Activated CD8-positive, alpha-beta T cell treated with anti-CD3 and anti-CD28 coated beads, Interleukin-2, amount 10 ng/mL, durations not matched to agents 7 days and 5 days (primary cell): ENCODE measurements at regions of chr12 and their contacts with region 1.

Region 1: GRCh38 chr12:1117970-1118563 is 127.0 kb downstream of the ERC1 start:
- DNase-seq: peak; percentile 81
- ATAC-seq: peak; percentile 43
- H3K4me3 Mint-ChIP-seq: no peak overlapping the region
- H3K27ac Mint-ChIP-seq: no peak overlapping the region
- H3K4me1 Mint-ChIP-seq: peaks cover 13% of the 10 kb centered on the region
- H3K27me3 Mint-ChIP-seq: no peaks in the 10 kb centered on the region

Region 2: GRCh38 chr12:1021886-1022619 is 96.0 kb before region 1 on chr12:
- CTCF ChIA-PET with region 1: no interaction called
- POLR2A ChIA-PET with region 1: no interaction called
- DNase-seq: no peak
- ATAC-seq: no peak
- H3K4me3 Mint-ChIP-seq: no peak overlapping the region
- H3K27ac Mint-ChIP-seq: no peak overlapping the region
- H3K4me1 Mint-ChIP-seq: no peaks in the 10 kb centered on the region
- H3K27me3 Mint-ChIP-seq: no peaks in the 10 kb centered on the region

Region 3: GRCh38 chr12:1047898-1048660 is 70.0 kb before region 1 on chr12:
- CTCF ChIA-PET with region 1: no interaction called
- POLR2A ChIA-PET with region 1: no interaction called
- DNase-seq: no peak
- ATAC-seq: no peak
- H3K4me3 Mint-ChIP-seq: no peak overlapping the region
- H3K27ac Mint-ChIP-seq: no peak overlapping the region
- H3K4me1 Mint-ChIP-seq: peaks cover 5% of the 10 kb centered on the region
- H3K27me3 Mint-ChIP-seq: no peaks in the 10 kb centered on the region

Region 4: DNA sequence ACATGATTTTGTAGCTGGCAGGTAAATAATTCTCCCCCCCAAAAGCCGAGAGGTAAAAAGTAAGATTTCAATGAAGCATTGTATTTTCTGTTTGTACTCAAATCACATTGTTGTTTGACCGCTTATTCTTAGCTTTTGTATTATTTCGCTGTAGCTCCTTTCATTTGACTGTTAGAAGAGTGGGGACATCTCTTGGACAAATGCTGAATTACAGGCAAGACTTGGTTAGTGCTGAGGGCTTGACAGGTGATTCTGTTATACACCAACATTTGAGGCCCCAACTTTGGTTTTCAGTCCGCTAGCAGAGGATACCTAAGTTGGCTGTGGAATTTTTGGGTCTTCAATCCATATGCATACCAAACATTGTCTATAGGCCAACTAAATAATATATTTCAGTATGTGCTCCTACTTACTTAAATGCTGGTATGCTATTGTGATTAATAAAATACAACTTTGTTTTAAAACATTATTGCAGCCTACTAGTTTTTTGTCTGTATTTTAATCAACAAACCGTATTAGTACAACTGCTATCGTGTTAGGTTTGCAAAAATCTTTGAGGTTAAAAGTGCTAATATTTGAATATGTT is 24.8 kb before region 1 on chr12:
- CTCF ChIA-PET with region 1: interaction called, 14 read pairs
- POLR2A ChIA-PET with region 1: no interaction called
- DNase-seq: peak; percentile 65
- ATAC-seq: peak; percentile 57
- H3K4me3 Mint-ChIP-seq: no peak overlapping the region
- H3K27ac Mint-ChIP-seq: no peak overlapping the region
- H3K4me1 Mint-ChIP-seq: peaks cover 1% of the 10 kb centered on the region
- H3K27me3 Mint-ChIP-seq: no peaks in the 10 kb centered on the region

Region 5: GRCh38 chr12:1171657-1172408 is 53.8 kb after region 1 on chr12:
- CTCF ChIA-PET with region 1: interaction called, 10 read pairs
- POLR2A ChIA-PET with region 1: no interaction called
- DNase-seq: no peak
- ATAC-seq: no peak
- H3K4me3 Mint-ChIP-seq: no peak overlapping the region
- H3K27ac Mint-ChIP-seq: no peak overlapping the region
- H3K4me1 Mint-ChIP-seq: no peaks in the 10 kb centered on the region
- H3K27me3 Mint-ChIP-seq: no peaks in the 10 kb centered on the region

Region 6: GRCh38 chr12:1474041-1474573 is 356.0 kb after region 1 on chr12:
- CTCF ChIA-PET with region 1: interaction called, 15 read pairs
- POLR2A ChIA-PET with region 1: no interaction called
- DNase-seq: no peak
- ATAC-seq: peak; percentile 35
- H3K4me3 Mint-ChIP-seq: no peak overlapping the region
- H3K27ac Mint-ChIP-seq: no peak overlapping the region
- H3K4me1 Mint-ChIP-seq: no peaks in the 10 kb centered on the region
- H3K27me3 Mint-ChIP-seq: no peaks in the 10 kb centered on the region

Region 7: DNA sequence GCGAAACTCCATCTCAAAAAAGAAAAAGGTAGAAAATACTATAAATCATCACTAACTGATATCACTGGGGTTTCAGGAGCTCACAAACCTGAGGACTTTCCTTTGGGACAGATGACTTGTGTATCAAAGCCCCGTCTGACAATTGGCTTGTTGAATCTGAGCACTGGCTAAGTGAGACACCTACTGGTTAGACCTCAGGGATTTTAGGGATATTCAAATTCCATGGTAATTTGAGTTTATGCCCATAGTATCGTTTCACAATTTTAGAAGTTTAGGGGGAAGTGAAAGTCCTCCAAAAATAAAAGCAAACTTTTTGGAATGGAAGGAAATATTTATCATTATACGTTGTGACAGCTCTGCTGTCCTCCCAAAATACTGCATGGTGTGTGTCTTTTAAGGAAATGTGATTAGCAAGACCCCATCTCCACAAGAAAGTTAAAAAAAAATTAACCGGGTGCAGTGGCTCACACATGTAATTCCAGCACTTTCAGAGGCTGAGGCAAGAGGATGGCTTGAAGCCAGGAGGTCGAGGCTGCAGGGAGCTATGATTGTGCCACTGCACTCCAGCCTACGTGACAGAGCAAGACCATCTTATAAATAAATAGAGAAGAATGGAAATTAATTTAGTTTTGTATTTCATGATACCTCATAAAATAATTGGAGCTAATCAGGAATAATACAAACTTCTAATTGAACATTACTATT is 427.1 kb after region 1 on chr12:
- CTCF ChIA-PET with region 1: interaction called, 16 read pairs
- POLR2A ChIA-PET with region 1: no interaction called
- DNase-seq: no peak
- ATAC-seq: no peak
- H3K4me3 Mint-ChIP-seq: no peak overlapping the region
- H3K27ac Mint-ChIP-seq: no peak overlapping the region
- H3K4me1 Mint-ChIP-seq: no peaks in the 10 kb centered on the region
- H3K27me3 Mint-ChIP-seq: peaks cover 42% of the 10 kb centered on the region

Region 8: GRCh38 chr12:1594261-1595025 is 476.4 kb after region 1 on chr12 and contains the start of gene FBXL14:
- CTCF ChIA-PET with region 1: interaction called, 75 read pairs
- POLR2A ChIA-PET with region 1: interaction called, 3 read pairs
- DNase-seq: peak; percentile 94
- ATAC-seq: peak; percentile 75
- H3K4me3 Mint-ChIP-seq: peak within 1 kb of the TSS; percentile 95
- H3K27ac Mint-ChIP-seq: peak within 1 kb of the TSS; percentile 98
- H3K4me1 Mint-ChIP-seq: peaks cover 45% of the 10 kb centered on the region
- H3K27me3 Mint-ChIP-seq: no peaks in the 10 kb centered on the region
- total RNA-seq, gene FBXL14: 27.5 to 28.9 TPM